GM23248 (cell line): ENCODE measurements at regions of chr2 and their contacts with region 1.

Region 1: GRCh38 chr2:35410431-35411061 is 945.0 kb upstream of the CRIM1 start:
- DNase-seq: peak; percentile 63
- H3K4me3 ChIP-seq: no peak overlapping the region
- H3K27ac ChIP-seq: no peak overlapping the region
- H3K4me1 ChIP-seq: no peaks in the 10 kb centered on the region
- H3K27me3 ChIP-seq: no peaks in the 10 kb centered on the region

Region 2: DNA sequence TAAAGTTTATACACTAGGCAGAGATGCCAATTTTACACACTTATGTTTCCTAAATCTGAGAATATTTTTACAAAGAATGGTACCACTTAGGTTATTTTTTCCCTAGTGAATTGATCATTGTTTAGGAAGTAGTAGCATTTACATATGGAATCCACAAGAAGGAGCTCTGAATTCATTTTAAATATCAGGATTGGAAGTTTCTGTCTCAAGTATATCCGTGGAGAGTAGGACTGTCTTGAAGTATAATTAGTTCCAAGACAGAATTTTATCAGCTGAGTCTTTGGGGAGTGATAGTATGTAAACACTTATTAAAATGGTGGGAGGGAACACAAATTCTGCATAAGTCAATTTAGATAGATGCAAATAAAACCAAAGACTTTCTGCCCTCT is 1729.2 kb before region 1 on chr2:
- in situ Hi-C with region 1: loop called (anchors 25 kb)
- DNase-seq: peak; percentile 42
- H3K4me3 ChIP-seq: no peak overlapping the region
- H3K27ac ChIP-seq: no peak overlapping the region
- H3K4me1 ChIP-seq: no peaks in the 10 kb centered on the region
- H3K27me3 ChIP-seq: no peaks in the 10 kb centered on the region

Region 3: DNA sequence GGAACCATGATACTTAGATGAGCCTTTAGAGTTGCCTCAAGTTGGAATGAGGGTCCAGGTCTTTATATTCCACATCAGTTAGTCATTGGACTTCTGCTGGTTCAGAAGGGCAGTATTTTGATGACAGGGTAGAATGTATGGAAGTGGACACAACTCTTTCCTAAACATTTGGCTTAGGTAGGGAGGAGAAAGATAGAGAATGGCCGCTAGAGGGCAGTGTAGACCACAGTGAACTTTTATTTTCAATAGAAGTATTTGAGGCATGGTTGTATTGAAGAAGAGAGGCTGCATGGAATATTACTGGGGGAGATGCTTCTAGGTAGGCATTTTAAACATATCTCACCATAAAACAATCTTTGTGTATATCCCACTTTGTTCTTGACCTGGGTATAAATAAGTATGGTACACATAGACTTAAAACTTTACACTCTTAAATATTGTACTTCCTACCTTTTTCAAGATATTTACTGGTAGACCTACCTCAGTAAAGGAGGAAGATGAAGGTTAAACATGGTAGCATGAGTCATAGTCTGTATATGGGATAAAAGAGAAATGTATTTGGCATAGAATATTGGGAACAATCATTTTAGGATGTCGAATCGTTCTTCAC is 1313.9 kb before region 1 on chr2:
- in situ Hi-C with region 1: loop called (anchors 25 kb)
- DNase-seq: peak; percentile 60
- H3K4me3 ChIP-seq: no peak overlapping the region
- H3K27ac ChIP-seq: no peak overlapping the region
- H3K4me1 ChIP-seq: no peaks in the 10 kb centered on the region
- H3K27me3 ChIP-seq: 0 out of 2 replicates have a peak, but pooled peaks cover 6% of the 10 kb centered on the region

Region 4: GRCh38 chr2:34912084-34912483 is 498.5 kb before region 1 on chr2:
- in situ Hi-C with region 1: no loop called
- DNase-seq: no peak
- H3K4me3 ChIP-seq: no peak overlapping the region
- H3K27ac ChIP-seq: no peak overlapping the region
- H3K4me1 ChIP-seq: no peaks in the 10 kb centered on the region
- H3K27me3 ChIP-seq: no peaks in the 10 kb centered on the region

Region 5: DNA sequence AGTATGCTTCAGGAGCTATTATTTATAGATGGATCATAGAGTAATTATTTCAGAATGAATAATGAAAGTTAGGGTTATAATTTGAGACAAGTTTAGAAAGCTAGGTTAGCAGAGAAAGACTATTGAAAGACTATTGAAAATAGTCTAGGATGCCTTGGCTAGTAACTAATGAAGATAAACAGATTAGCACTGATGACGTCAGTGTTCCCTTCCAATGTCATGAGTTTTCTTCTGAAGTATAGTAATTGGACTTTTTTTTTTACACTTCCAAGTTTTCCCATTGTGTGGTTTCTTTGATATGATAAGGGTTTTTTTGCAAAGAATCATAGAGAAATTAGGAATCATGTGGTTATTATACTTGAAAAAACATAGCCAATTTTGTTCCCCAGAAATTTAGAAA is 96.5 kb before region 1 on chr2:
- in situ Hi-C with region 1: no loop called
- DNase-seq: no peak
- H3K4me3 ChIP-seq: no peak overlapping the region
- H3K27ac ChIP-seq: no peak overlapping the region
- H3K4me1 ChIP-seq: no peaks in the 10 kb centered on the region
- H3K27me3 ChIP-seq: no peaks in the 10 kb centered on the region